CD8-positive, alpha-beta memory T cell (primary cell): ENCODE measurements at regions of chr5 and their contacts with region 1.

Region 1: DNA sequence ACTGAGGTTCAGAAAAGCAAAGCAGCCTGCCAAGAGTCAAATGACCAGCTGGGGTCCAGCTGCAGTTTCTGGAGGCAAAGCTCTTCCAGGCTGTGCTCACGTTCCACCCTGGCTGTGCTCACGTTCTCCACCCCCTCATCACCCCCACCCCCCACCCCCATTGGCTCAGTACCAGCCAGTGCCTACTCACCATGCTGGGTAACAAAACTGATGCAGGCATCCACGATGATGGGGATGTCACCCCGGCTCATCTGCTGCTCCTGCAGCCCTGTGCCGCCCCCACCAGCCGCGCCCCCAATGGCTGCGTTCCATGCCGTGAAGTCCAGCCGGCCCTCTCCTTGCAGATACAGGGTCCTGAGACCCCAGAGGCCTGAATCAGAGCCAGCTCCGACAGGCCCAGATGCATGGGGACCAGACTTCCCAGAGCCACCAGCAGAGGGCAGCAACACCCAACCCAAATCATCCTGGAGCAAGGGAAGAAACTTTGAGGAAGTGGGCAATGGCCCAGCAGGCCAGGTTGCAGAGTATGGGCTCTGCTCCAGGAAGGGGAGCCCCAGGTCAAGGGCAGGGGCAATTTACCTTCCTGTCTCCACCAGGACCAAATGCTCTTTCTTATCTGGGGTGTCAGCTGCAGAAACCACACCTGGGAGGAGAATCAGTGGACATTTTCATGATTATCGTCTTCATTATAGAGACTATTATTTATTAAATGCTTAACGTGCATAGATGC is 13.7 kb upstream of the FCHSD1 start:
- DNase-seq: peak; percentile 49 to 79 (median 62)
- H3K4me3 ChIP-seq: no peak overlapping the region
- H3K4me3 Mint-ChIP-seq: no peak overlapping the region
- H3K27ac ChIP-seq: no peak overlapping the region
- H3K27ac Mint-ChIP-seq: no peak overlapping the region
- H3K4me1 ChIP-seq: no peaks in the 10 kb centered on the region
- H3K4me1 Mint-ChIP-seq: peaks cover 4 to 5% (median 4%) of the 10 kb centered on the region in 3 donors
- H3K27me3 ChIP-seq: no peaks in the 10 kb centered on the region
- H3K27me3 Mint-ChIP-seq: peaks cover 0 to 2% of the 10 kb centered on the region in 2 donors

Region 2: GRCh38 chr5:141605523-141606277 is 59.2 kb before region 1 on chr5:
- CTCF ChIA-PET with region 1: no interaction called
- POLR2A ChIA-PET with region 1: no interaction called
- DNase-seq: peak; percentile 54 to 88 (median 85)
- H3K4me3 ChIP-seq: peak overlapping the region; percentile 33
- H3K4me3 Mint-ChIP-seq: peak overlapping the region; percentile 66 to 82 (median 77)
- H3K27ac ChIP-seq: peak overlapping the region; percentile 67
- H3K27ac Mint-ChIP-seq: peak overlapping the region; percentile 77 to 99 (median 92)
- H3K4me1 ChIP-seq: peaks cover 90% of the 10 kb centered on the region
- H3K4me1 Mint-ChIP-seq: peaks cover 89 to 96% (median 96%) of the 10 kb centered on the region in 3 donors
- H3K27me3 ChIP-seq: no peaks in the 10 kb centered on the region
- H3K27me3 Mint-ChIP-seq: no peaks in the 10 kb centered on the region

Region 3: GRCh38 chr5:141681695-141682641 is 17.1 kb after region 1 on chr5 and contains the start of gene ARAP3:
- CTCF ChIA-PET with region 1: interaction called, 14 read pairs
- POLR2A ChIA-PET with region 1: no interaction called
- DNase-seq: peak in 4 of 5 donors; percentile 17 to 64 (median 39)
- H3K4me3 ChIP-seq: peak within 1 kb of the TSS; percentile 50
- H3K4me3 Mint-ChIP-seq: peak within 1 kb of the TSS; percentile 65 to 91 (median 84)
- H3K27ac ChIP-seq: peak within 1 kb of the TSS; percentile 38
- H3K27ac Mint-ChIP-seq: peak within 1 kb of the TSS; percentile 7 to 93 (median 78)
- H3K4me1 ChIP-seq: peaks cover 27% of the 10 kb centered on the region
- H3K4me1 Mint-ChIP-seq: peaks cover 25 to 46% (median 29%) of the 10 kb centered on the region in 3 donors
- H3K27me3 ChIP-seq: no peaks in the 10 kb centered on the region
- H3K27me3 Mint-ChIP-seq: peaks cover 0 to 4% of the 10 kb centered on the region in 2 donors
- total RNA-seq, gene ARAP3: 6.9 to 7.9 TPM